ENCODE measurements at regions of chr6 and their contacts with region 1.

Region 1: GRCh38 chr6:44265007-44265721 is at the start of gene NFKBIE:
- DNase-seq: peak; percentile 97
- ATAC-seq: peak; percentile 52
- H3K4me3 Mint-ChIP-seq: peak within 1 kb of the TSS; percentile 88
- H3K27ac Mint-ChIP-seq: peak within 1 kb of the TSS; percentile 93
- H3K4me1 Mint-ChIP-seq: peaks cover 58% of the 10 kb centered on the region
- H3K27me3 Mint-ChIP-seq: peaks cover 14% of the 10 kb centered on the region
- total RNA-seq, gene NFKBIE: 17.2 to 19.9 TPM

Region 2: GRCh38 chr6:44052419-44053023 is 212.6 kb before region 1 on chr6:
- CTCF ChIA-PET with region 1: no interaction called
- POLR2A ChIA-PET with region 1: no interaction called
- intact Hi-C with region 1: no loop called
- DNase-seq: no peak
- ATAC-seq: peak; percentile 31
- H3K4me3 Mint-ChIP-seq: no peak overlapping the region
- H3K27ac Mint-ChIP-seq: no peak overlapping the region
- H3K4me1 Mint-ChIP-seq: peaks cover 6% of the 10 kb centered on the region
- H3K27me3 Mint-ChIP-seq: no peaks in the 10 kb centered on the region

Region 3: GRCh38 chr6:44127186-44128019 is 137.8 kb before region 1 on chr6 and contains the starts of genes MRPL14 and TMEM63B:
- CTCF ChIA-PET with region 1: interaction called, 3 read pairs
- POLR2A ChIA-PET with region 1: no interaction called
- intact Hi-C with region 1: loop called (anchors 1 to 2 kb)
- DNase-seq: peak; percentile 95
- ATAC-seq: peak; percentile 81
- H3K4me3 Mint-ChIP-seq: peak within 1 kb of the TSS; percentile 82
- H3K27ac Mint-ChIP-seq: peak within 1 kb of the TSS; percentile 96
- H3K4me1 Mint-ChIP-seq: peaks cover 46% of the 10 kb centered on the region
- H3K27me3 Mint-ChIP-seq: no peaks in the 10 kb centered on the region
- total RNA-seq, gene MRPL14: 29.5 to 43.3 TPM
- total RNA-seq, gene TMEM63B: 10.9 to 15.2 TPM

Region 4: DNA sequence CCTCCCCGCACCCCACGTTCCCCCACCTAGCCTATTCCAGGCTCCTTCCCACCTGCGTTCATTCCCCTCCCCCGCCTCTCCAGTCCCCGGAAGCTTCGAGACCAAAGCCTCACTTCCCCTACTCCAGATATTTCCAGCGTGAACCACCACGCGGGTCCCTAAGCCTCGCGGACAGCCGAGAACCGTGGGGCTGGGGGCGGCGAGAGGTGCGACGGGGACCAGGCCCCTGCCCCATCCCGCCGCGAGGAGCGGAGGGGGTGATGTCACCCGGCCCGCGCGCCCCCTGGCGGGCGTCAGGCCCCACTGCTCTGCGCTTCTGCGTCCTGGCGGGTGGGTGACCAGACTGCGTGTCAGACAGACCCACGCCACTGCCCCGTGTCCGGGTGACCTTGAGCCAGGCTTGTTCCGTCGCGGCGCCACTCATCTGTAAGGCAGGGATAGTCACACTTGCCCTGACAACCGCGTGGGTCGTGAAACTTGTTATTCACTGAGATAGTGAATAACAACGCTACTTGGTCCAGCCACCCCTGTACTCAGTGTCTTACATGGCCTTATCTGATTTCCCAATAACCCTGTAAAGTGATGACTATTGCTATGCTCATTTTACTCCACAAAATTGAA is 27.2 kb before region 1 on chr6:
- CTCF ChIA-PET with region 1: interaction called, 4 read pairs
- POLR2A ChIA-PET with region 1: no interaction called
- intact Hi-C with region 1: loop called in 1 of 2 experiments (anchors 1 kb)
- DNase-seq: peak; percentile 88
- ATAC-seq: peak; percentile 78
- H3K4me3 Mint-ChIP-seq: peak overlapping the region; percentile 75
- H3K27ac Mint-ChIP-seq: peak overlapping the region; percentile 94
- H3K4me1 Mint-ChIP-seq: peaks cover 31% of the 10 kb centered on the region
- H3K27me3 Mint-ChIP-seq: no peaks in the 10 kb centered on the region

Region 5: DNA sequence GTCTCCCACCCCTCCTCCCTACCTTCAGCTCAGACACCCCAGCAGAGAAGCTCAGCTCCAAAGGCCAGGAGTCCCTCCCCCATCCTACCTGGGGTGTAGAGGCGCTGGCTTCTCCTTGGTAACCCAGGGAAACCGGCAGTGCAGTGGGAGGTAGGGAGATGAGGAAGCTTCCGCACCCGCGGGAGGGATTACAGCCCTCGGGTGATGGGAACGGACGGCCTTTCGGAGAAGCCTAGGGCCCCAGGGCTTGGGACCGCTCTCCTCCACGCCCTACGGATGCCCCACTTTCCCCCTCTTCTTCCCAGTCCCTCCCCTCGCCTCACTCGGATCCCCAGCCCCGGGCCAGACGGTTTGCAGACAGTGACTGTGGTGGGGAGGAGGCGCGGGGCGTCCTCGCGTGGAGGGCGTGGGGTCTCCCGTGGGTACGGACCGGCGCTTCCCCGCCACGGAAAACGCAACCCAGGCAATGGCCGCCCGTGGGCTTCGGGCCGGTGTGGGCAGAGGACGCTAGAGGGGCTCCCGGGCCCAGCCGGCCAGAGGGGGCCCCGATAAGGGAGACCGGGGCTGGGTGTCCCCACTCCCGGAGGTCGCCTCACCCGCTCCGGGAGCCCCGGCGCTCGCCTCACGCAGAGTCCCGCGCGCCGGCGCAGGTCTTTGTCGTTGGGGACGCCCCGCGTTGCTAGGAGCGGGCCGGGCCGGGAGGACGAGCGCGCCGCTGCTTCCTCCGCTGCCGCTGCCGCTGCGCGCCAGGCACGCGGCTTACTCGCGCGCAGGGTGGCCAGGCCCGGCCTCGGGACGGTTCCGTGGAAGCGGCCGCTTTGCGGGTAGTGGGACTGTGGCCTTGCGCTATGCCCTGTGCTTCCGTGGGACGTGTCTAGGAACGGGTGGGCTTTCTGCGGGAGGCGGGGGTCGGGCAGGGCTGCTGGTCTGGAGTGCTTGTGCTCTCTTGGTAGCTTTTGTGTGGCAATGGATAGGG is 32.2 kb after region 1 on chr6:
- CTCF ChIA-PET with region 1: interaction called, 55 read pairs
- POLR2A ChIA-PET with region 1: no interaction called
- intact Hi-C with region 1: no loop called
- DNase-seq: peak; percentile 78
- ATAC-seq: peak; percentile 91
- H3K4me3 Mint-ChIP-seq: peak overlapping the region; percentile 33
- H3K27ac Mint-ChIP-seq: no peak overlapping the region
- H3K4me1 Mint-ChIP-seq: peaks cover 6% of the 10 kb centered on the region
- H3K27me3 Mint-ChIP-seq: peaks cover 31% of the 10 kb centered on the region

Region 6: DNA sequence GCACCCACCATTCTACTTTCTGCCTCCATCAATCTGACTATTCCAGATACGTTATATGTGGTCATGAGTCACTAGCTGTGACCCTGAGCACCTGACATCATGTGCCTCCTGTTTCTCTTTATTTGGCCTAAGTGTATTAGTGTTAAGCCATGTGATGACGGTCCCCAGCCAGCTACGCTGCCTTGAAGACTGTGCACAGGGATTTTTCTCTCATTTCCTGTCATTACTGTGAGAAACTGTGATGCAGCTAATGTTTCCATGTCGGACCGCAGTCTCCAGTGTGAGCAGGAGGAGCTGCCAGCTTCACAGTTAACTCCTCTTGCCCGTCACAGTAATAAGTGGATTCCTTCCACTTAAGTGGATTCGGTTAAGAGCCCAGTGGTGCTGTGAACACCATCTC is 67.4 kb after region 1 on chr6:
- CTCF ChIA-PET with region 1: interaction called, 56 read pairs
- POLR2A ChIA-PET with region 1: interaction called, 3 read pairs
- intact Hi-C with region 1: no loop called
- DNase-seq: no peak
- ATAC-seq: peak; percentile 42
- H3K4me3 Mint-ChIP-seq: no peak overlapping the region
- H3K27ac Mint-ChIP-seq: no peak overlapping the region
- H3K4me1 Mint-ChIP-seq: no peaks in the 10 kb centered on the region
- H3K27me3 Mint-ChIP-seq: peaks cover 14% of the 10 kb centered on the region

Region 7: GRCh38 chr6:44456070-44456965 is 191.2 kb after region 1 on chr6:
- CTCF ChIA-PET with region 1: interaction called, 7 read pairs
- POLR2A ChIA-PET with region 1: no interaction called
- intact Hi-C with region 1: loop called (anchors 1 to 5 kb)
- DNase-seq: peak; percentile 66
- ATAC-seq: peak; percentile 91
- H3K4me3 Mint-ChIP-seq: no peak overlapping the region
- H3K27ac Mint-ChIP-seq: no peak overlapping the region
- H3K4me1 Mint-ChIP-seq: no peaks in the 10 kb centered on the region
- H3K27me3 Mint-ChIP-seq: no peaks in the 10 kb centered on the region

Measured in activated CD4-positive, alpha-beta T cell treated with anti-CD3 and anti-CD28 coated beads for 36 hours (primary cell).